CD14-positive monocyte (primary cell): ENCODE measurements at regions of chr10 and their contacts with region 1.

Region 1: GRCh38 chr10:86585037-86585725 is 63.6 kb upstream of the WAPL start:
- DNase-seq: peak; percentile 58 to 65 (median 61)
- H3K4me3 ChIP-seq: no peak overlapping the region
- H3K4me3 Mint-ChIP-seq: no peak overlapping the region
- H3K27ac ChIP-seq: no peak overlapping the region
- H3K27ac Mint-ChIP-seq: no peak overlapping the region
- H3K4me1 ChIP-seq: peaks cover 16 to 20% of the 10 kb centered on the region in 2 donors
- H3K4me1 Mint-ChIP-seq: peaks cover 17% of the 10 kb centered on the region
- H3K27me3 ChIP-seq: no peaks in the 10 kb centered on the region
- H3K27me3 Mint-ChIP-seq: peaks cover 2 to 6% (median 3%) of the 10 kb centered on the region in 3 donors
- CTCF ChIP-seq: peak; percentile 96

Region 2: DNA sequence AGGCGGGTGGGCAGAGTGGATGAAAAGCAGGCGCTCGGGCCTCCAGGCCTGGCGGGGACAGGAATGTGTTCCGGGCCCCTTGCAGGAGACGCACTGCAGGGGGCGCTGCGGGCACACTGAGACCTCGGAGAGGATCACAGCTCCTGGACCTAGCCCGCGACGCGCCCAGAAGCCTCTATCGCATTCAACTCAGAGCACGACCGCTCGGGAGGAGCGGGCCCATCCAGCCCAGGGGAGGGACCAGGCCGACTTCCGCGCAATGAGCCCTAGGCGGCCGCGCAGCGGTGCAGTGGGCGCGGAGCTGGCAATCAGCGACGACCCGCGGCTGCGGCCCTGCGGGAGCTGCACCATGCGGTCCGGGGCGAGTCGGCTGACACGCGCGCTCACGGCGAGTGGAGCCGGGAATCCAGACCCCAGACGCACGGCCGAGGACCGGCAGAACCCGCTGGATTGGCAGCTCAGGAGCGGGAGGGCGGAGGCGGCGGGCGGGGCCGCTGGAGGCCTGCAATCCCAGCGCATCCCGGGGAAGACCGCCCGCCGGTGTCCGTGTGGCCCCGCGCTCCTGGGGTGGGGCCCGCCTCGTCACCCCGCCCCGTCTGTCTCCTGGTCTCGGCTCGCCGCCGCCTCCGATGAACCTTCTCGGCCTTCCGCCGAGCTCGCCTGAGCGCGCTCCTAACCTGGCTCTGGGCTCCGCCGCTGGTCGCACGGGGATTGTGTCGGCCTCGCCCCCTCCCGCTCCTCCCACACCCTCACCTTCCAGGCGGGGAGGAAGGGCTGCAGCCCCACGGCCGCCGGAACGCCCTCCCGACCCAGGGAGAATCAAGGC is 185.1 kb before region 1 on chr10:
- intact Hi-C with region 1: loop called (anchors 1 to 2 kb)
- DNase-seq: peak; percentile 78 to 84 (median 82)
- H3K4me3 ChIP-seq: peak overlapping the region; percentile 43 to 78 (median 46)
- H3K4me3 Mint-ChIP-seq: peak overlapping the region; percentile 81 to 89
- H3K27ac ChIP-seq: no peak overlapping the region
- H3K27ac Mint-ChIP-seq: no peak overlapping the region
- H3K4me1 ChIP-seq: peaks cover 15 to 23% of the 10 kb centered on the region in 2 donors
- H3K4me1 Mint-ChIP-seq: peaks cover 23% of the 10 kb centered on the region
- H3K27me3 ChIP-seq: peaks cover 27 to 38% of the 10 kb centered on the region in 2 donors
- H3K27me3 Mint-ChIP-seq: peaks cover 40 to 65% (median 52%) of the 10 kb centered on the region in 3 donors
- CTCF ChIP-seq: peak; percentile 90

Region 3: DNA sequence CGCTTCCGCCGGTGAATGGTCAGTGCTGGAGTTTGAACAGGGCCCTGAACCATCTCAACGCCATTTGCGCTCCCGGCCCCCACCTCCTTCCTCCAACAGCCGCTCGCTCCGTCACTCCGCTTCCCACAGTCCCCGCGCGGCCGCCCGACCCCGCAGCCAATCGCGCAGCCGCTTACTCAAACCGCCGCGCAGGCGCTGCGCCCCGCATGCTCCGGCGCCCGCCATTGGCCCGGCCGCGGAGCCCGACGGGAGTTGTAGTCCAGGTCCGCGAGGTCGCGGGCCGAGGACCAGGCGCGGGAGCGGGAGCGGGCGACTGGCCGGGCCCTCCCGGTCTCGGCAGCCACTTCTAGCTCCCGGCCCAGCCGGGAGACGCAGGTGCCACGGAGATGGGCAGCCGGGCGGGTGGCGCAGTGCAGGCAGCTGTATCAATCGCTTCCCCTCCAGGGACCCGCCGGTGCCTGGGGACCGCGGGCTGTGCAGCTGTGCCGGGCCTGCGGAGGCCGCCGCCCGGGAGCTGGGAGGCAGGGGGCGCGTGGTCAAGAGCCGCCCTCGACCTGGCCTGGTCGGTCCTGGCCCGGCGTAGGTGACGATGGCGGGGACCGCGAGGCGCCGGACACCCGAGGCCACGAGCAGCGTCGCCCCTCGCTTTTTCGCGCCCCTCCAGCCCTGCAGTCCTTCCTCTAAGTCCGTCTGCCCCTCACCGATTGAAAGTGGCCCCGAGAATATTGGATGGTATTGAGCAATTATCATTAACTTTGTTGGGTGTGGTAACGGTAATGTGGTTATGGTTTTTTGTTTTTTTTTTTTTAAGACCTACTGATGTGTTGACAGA is 63.3 kb before region 1 on chr10 and contains the start of gene WAPL:
- intact Hi-C with region 1: loop called in 1 of 2 experiments (anchors 5 kb)
- DNase-seq: peak; percentile 92 to 93 (median 92)
- H3K4me3 ChIP-seq: peak within 1 kb of the TSS; percentile 81 to 90 (median 86)
- H3K4me3 Mint-ChIP-seq: peak within 1 kb of the TSS; percentile 92 to 97
- H3K27ac ChIP-seq: peak within 1 kb of the TSS; percentile 87 to 93
- H3K27ac Mint-ChIP-seq: peak within 1 kb of the TSS; percentile 94 to 98 (median 96)
- H3K4me1 ChIP-seq: peaks cover 24 to 33% of the 10 kb centered on the region in 2 donors
- H3K4me1 Mint-ChIP-seq: peaks cover 47% of the 10 kb centered on the region
- H3K27me3 ChIP-seq: no peaks in the 10 kb centered on the region
- H3K27me3 Mint-ChIP-seq: peaks cover 0 to 2% (median 0%) of the 10 kb centered on the region in 3 donors
- CTCF ChIP-seq: no peak
- polyA plus RNA-seq, gene WAPL: 17.8 to 26.5 (median 18.3) TPM